Right cardiac atrium (tissue), 5 donors: ENCODE measurements at regions of chr16 and their contacts with region 1.

Region 1: GRCh38 chr16:72501739-72502593 is 330.0 kb upstream of the PMFBP1 start:
- DNase-seq: peak; percentile 42 to 71 (median 61)
- ATAC-seq: peak; percentile 54 to 68
- H3K4me3 ChIP-seq: no peak overlapping the region
- H3K27ac ChIP-seq: no peak overlapping the region
- H3K4me1 ChIP-seq: no peaks in the 10 kb centered on the region
- H3K27me3 ChIP-seq: no peaks in the 10 kb centered on the region

Region 2: GRCh38 chr16:72371307-72372086 is 130.5 kb before region 1 on chr16:
- intact Hi-C with region 1: no loop called
- DNase-seq: no peak
- ATAC-seq: no peak
- H3K4me3 ChIP-seq: no peak overlapping the region
- H3K27ac ChIP-seq: no peak overlapping the region
- H3K4me1 ChIP-seq: no peaks in the 10 kb centered on the region
- H3K27me3 ChIP-seq: no peaks in the 10 kb centered on the region

Region 3: GRCh38 chr16:73196670-73197069 is 694.7 kb after region 1 on chr16:
- intact Hi-C with region 1: loop called in 1 of 4 experiments (anchors 10 kb)
- DNase-seq: peak; percentile 70 to 88 (median 71)
- ATAC-seq: peak; percentile 87 to 89
- H3K4me3 ChIP-seq: no peak overlapping the region
- H3K27ac ChIP-seq: no peak overlapping the region
- H3K4me1 ChIP-seq: no peaks in the 10 kb centered on the region
- H3K27me3 ChIP-seq: no peaks in the 10 kb centered on the region

Region 4: DNA sequence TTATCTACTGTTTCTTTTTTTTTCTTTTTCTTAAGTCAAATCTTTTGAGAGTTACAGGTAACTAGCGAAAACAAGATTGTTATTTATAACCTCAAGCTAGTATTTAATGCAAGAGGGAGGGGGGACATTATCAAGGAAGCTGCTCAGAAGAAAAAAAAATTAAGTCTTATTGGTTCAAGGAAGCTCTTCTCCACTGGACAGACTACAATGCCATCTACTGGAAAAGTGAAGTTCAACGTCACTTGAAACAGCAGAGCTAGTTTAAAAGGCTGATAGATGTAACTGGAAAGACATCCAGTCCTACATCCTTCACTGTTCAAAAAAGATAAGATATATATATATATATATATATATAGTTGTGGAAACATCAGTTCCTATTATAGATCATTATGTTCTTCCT is 1376.6 kb after region 1 on chr16:
- intact Hi-C with region 1: loop called in 2 of 4 experiments (anchors 10 kb)
- DNase-seq: no peak
- ATAC-seq: peak in 1 of 2 donors; percentile 43
- H3K4me3 ChIP-seq: no peak overlapping the region
- H3K27ac ChIP-seq: no peak overlapping the region
- H3K4me1 ChIP-seq: no peaks in the 10 kb centered on the region
- H3K27me3 ChIP-seq: no peaks in the 10 kb centered on the region

Region 5: DNA sequence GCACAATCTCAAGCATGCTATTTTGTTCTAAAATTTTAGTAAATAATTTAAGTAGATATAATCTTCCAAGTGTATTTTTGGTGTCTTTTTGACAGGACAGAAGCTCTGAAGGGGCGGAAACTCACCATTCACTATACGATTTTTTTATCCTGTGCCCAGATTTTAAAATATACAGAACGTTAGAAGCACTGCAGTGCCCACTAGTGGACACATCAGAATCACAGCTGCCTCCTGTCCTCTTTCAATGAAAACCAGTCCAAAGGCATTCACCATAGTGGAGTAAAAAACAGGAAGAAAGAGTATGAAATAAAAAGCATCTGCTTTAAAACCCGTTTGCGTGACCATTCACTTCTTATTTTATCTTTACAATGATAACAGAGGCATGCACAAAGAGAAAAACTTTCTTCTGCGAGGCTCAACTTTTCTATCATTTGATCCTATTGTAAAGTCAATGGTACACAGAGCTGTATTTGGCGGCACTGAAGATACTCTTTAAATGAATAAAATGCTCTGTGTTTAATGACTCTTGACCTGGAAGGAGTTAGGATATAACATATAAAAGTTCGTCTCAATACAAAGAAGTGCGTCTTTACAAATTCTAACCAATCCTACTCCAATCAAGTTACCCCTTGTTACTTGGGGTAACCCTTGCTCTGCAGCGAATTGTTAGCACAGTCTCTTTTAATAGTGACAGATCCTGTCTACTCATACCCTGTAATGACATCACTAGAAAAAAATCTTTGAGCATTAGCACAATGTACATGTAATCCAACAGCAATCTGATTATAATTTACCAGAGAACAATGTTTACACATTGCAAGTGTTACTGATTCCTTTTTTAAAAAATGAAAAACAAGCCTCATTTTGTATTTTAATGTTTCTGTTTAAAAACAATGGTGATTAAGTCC is 1454.9 kb after region 1 on chr16:
- intact Hi-C with region 1: loop called in 1 of 4 experiments (anchors 10 kb)
- DNase-seq: peak; percentile 43 to 80 (median 50)
- ATAC-seq: no peak
- H3K4me3 ChIP-seq: no peak overlapping the region
- H3K27ac ChIP-seq: no peak overlapping the region
- H3K4me1 ChIP-seq: no peaks in the 10 kb centered on the region
- H3K27me3 ChIP-seq: no peaks in the 10 kb centered on the region